Ovary (tissue), 10 donors: ENCODE measurements at regions of chr2 and their contacts with region 1.

Region 1: DNA sequence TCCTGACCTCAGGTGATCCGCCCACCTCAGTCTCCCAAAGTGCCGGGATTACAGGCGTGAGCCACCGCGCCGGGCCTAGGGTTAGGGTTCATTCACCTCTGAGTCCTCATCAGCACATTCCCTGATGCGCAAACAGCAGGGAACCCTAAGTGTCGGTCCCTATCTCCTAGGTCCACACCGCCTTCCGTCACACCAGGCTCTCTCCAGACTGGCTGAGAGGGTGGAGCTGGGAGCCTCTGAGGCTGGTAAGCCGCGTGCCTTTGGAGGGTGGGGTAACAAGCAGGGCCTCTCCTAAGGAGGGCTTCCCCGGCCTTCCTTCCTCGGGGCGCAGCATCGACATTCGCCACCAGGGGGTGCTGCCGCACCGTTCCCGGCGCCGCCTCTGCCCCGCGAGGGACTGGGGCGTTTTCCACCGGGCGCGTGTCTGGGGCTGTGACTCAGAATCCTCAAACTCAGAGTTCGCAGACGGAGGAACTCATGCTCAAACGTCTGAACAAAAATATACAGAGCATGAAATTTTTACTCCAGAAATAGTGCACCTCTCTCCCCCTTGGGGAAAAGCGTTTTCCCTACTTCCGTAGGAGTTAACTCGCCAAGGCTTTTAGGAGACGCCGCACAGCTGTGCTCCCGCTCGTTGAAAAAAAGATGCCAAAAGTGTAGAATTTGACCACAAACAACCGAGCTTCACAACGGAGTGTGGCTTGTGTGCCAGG is 63.9 kb upstream of the ASAP2 start:
- DNase-seq: peak; percentile 84 to 94 (median 91)
- H3K4me3 ChIP-seq: peak overlapping the region; percentile 21
- H3K27ac ChIP-seq: peak overlapping the region; percentile 54 to 63
- H3K4me1 ChIP-seq: no peaks in the 10 kb centered on the region
- H3K27me3 ChIP-seq: no peaks in the 10 kb centered on the region
- CTCF ChIP-seq: peak; percentile 96 to 99 (median 99)
- EP300 ChIP-seq: no peak
- POLR2A ChIP-seq: peak; percentile 12

Region 2: DNA sequence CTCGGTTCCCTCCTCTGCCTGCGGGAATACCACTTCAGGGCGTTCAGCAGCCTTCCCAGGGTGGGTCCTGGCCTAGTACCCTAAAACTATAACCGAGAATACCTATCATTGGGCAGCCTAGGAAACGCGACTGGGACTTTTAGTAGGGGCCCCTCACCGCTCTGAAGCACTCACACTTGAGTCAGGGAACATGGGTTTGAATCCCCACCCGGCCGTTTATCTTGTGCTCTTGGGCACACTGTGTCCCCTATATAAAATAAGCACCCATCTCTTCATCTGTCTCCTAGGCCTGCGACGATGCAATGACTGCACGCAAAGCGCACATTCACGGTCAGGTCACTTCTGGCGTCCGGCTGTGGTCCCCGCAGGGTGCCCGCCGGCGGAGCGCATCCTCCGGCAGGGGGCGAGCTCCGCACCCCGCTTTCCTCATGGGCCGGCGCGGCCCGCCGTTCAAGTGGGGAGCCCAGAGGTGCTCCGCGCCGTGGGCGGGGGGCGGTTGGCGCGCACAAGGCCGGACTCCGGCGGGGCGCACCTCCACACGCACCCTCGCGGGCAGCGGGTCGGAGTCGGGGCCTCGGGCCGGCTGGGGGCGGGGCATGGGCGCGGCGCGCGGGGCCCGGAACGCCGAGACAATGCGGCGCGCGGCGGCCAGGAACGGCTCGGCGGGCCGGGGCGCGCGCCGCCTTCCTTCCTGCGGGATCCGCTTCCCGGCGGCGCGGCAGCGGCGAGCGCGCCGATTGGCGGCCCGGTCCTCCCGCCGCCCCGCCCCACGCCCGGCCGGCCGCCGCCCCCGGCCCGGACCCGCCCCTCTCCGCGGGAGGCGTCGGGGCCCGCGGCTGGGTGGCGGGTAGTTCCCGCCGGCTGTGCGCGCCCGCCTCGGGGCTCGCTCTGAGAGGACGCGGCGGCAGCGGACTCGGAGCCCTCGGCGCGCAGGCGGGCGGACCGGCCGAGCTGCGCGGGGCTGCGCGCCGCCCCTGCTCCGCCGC is 63.5 kb after region 1 on chr2 and contains the start of gene ASAP2:
- intact Hi-C with region 1: loop called in 1 of 4 experiments (anchors 10 kb)
- DNase-seq: peak; percentile 72 to 84 (median 81)
- H3K4me3 ChIP-seq: peak within 1 kb of the TSS; percentile 90
- H3K27ac ChIP-seq: peak within 1 kb of the TSS; percentile 75 to 95
- H3K4me1 ChIP-seq: no peaks in the 10 kb centered on the region
- H3K27me3 ChIP-seq: no peaks in the 10 kb centered on the region
- CTCF ChIP-seq: peak; percentile 84 to 93 (median 89)
- EP300 ChIP-seq: no peak
- POLR2A ChIP-seq: peak; percentile 15
- total RNA-seq, gene ASAP2: 11.3 to 22.7 (median 17.3) TPM

Region 3: DNA sequence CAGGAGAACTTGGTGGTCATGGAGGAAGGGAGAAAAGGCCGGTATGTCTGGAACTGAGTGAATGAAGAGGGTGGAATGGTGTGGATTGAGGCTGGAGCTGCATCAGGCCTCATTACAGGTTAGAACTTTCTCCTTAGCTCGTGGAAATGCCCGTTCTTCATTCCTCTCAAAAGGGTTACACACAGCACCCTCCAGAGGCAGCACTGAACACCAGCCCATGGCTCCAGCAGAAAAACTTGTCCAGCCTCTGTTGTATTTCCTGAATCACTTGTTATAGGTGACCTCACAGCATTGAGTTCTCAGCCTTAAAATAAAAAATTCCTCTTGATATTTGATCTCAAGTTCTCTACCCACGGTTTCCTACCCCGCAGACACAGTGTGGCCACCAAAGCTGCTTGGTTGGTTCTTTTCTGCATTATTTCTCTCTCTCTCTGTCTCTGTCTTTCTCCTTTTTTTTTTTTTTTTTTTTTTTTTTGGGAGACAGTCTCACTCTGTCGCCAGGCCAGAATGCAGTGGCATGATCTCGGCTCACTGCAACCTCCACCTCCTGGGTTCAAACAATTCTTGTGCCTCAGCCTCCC is 191.0 kb after region 1 on chr2:
- intact Hi-C with region 1: loop called in 3 of 4 experiments (anchors 5 to 10 kb)
- DNase-seq: peak; percentile 34 to 66 (median 48)
- H3K4me3 ChIP-seq: no peak overlapping the region
- H3K27ac ChIP-seq: no peak overlapping the region
- H3K4me1 ChIP-seq: peaks cover 4% of the 10 kb centered on the region
- H3K27me3 ChIP-seq: no peaks in the 10 kb centered on the region
- CTCF ChIP-seq: peak; percentile 38 to 51 (median 40)
- EP300 ChIP-seq: no peak
- POLR2A ChIP-seq: no peak

Region 4: GRCh38 chr2:9347411-9347881 is 204.7 kb after region 1 on chr2:
- intact Hi-C with region 1: loop called in 1 of 4 experiments (anchors 10 kb)
- DNase-seq: peak in 1 of 5 donors; percentile 77
- H3K4me3 ChIP-seq: no peak overlapping the region
- H3K27ac ChIP-seq: no peak overlapping the region
- H3K4me1 ChIP-seq: no peaks in the 10 kb centered on the region
- H3K27me3 ChIP-seq: no peaks in the 10 kb centered on the region
- CTCF ChIP-seq: no peak
- EP300 ChIP-seq: no peak
- POLR2A ChIP-seq: no peak

Region 5: GRCh38 chr2:9373077-9373875 is 230.6 kb after region 1 on chr2:
- intact Hi-C with region 1: loop called in 2 of 4 experiments (anchors 5 to 10 kb)
- DNase-seq: no peak
- H3K4me3 ChIP-seq: no peak overlapping the region
- H3K27ac ChIP-seq: no peak overlapping the region
- H3K4me1 ChIP-seq: no peaks in the 10 kb centered on the region
- H3K27me3 ChIP-seq: no peaks in the 10 kb centered on the region
- CTCF ChIP-seq: no peak
- EP300 ChIP-seq: no peak
- POLR2A ChIP-seq: no peak

Region 6: GRCh38 chr2:9378433-9379390 is 236.0 kb after region 1 on chr2:
- intact Hi-C with region 1: loop called in 2 of 4 experiments (anchors 5 to 10 kb)
- DNase-seq: peak in 4 of 5 donors; percentile 50 to 69 (median 63)
- H3K4me3 ChIP-seq: no peak overlapping the region
- H3K27ac ChIP-seq: no peak overlapping the region
- H3K4me1 ChIP-seq: no peaks in the 10 kb centered on the region
- H3K27me3 ChIP-seq: no peaks in the 10 kb centered on the region
- CTCF ChIP-seq: no peak
- EP300 ChIP-seq: no peak
- POLR2A ChIP-seq: no peak

Region 7: GRCh38 chr2:9423100-9423921 is 280.6 kb after region 1 on chr2 and contains the starts of genes CPSF3 and ITGB1BP1:
- intact Hi-C with region 1: loop called in 1 of 4 experiments (anchors 10 kb)
- DNase-seq: peak; percentile 97 to 99 (median 98)
- H3K4me3 ChIP-seq: peak within 1 kb of the TSS; percentile 74
- H3K27ac ChIP-seq: peak within 1 kb of the TSS; percentile 66 to 90
- H3K4me1 ChIP-seq: peaks cover 6% of the 10 kb centered on the region
- H3K27me3 ChIP-seq: no peaks in the 10 kb centered on the region
- CTCF ChIP-seq: peak in 1 of 3 donors; percentile 72
- EP300 ChIP-seq: no peak
- POLR2A ChIP-seq: peak; percentile 76
- total RNA-seq, gene CPSF3: 14.8 to 24.6 (median 19.8) TPM
- total RNA-seq, gene ITGB1BP1: 14.5 to 82.2 (median 64.5) TPM

Region 8: DNA sequence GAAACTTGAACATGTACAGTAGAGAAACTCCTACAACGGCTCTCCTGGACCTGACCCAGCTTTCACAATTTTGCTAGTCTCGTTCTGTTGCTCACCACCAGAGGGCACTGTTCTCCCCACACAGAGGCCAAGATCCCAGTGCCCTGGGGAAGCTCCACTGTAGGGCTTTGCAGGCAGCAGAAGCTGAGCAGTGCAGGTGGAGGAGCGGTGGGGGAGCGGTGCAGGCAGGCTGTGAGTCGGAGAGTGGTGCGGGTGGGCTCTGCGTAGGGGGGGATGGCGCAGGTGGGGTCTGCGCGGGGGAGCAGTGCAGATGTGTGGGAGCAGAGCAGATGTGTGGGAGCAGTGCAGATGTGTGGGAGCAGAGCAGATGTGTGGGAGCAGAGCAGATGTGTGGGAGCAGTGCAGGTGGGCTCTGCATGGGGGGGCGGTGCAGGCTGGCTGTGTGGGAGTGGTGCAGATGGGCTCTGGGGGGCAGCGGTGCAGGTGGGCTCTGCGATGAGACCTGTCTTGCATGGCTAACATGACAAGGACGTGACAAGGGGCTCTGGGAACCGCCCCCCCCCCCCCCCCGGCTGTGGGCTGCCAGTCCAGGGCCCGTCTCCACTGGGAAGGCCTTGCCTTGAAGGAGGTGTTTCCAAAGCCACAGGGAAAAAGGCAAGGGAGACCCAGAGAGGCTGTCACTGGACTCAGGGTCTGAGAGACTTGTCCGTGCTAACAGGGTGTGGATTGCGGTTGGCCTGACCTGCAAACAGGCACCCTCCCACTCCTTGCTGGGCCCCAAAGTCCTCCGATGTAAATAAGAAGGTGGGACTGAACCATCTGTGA is 930.2 kb after region 1 on chr2:
- intact Hi-C with region 1: no loop called
- DNase-seq: peak; percentile 84 to 87 (median 84)
- H3K4me3 ChIP-seq: no peak overlapping the region
- H3K27ac ChIP-seq: no peak overlapping the region
- H3K4me1 ChIP-seq: peaks cover 2% of the 10 kb centered on the region
- H3K27me3 ChIP-seq: no peaks in the 10 kb centered on the region
- CTCF ChIP-seq: peak; percentile 77 to 86 (median 85)
- EP300 ChIP-seq: no peak
- POLR2A ChIP-seq: no peak